Activated naive CD4-positive, alpha-beta T cell treated with anti-CD3 and anti-CD28 coated beads, Interleukin-2, amount 10 ng/mL, durations not matched to agents 7 days and 5 days (primary cell): ENCODE measurements at regions of chr17 and their contacts with region 1.

Region 1: DNA sequence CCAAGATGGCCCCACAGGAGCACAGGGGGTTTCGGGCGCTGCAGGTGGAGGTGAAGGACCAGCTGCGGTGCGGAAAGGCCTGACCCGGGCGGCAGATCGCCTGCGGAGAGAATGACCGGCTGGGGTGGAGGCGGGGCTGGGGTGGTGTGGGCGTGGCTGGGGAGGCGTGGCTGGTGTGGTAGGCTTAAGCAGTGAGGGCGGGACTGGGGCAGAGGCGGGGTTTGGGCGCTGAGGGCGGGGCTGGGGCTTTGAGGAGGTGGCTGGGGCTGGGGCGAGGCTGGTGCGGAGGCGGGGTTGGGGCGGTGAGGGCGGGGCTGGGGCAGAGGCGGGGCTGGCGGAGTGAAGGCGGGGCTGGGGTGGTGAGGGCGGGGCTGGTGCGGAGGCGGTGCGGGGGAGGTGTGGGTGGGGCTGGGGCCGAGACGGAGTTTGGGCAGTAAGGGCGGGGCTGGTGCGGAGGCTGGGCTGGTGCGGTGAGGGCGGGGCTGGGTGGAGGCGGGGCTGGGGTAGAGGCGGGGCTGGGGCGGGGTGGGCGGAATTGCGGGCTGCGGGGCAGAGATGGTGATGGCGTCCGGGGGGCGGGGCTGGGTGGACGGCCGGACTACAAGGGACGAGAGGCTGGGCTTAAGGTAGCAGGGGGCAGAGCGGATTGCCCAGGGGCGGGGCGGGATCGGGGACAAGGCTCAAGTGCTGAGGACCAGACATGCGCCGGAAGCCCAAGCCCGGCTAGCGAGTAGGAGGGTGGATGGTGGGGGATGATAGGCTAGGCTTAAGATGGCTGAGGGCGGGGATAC is 9.9 kb upstream of the GSDMA start:
- DNase-seq: peak; percentile 99
- H3K4me3 Mint-ChIP-seq: peak overlapping the region; percentile 79
- H3K27ac Mint-ChIP-seq: peak overlapping the region; percentile 62
- H3K4me1 Mint-ChIP-seq: peaks cover 39% of the 10 kb centered on the region
- H3K27me3 Mint-ChIP-seq: peaks cover 50% of the 10 kb centered on the region

Region 2: DNA sequence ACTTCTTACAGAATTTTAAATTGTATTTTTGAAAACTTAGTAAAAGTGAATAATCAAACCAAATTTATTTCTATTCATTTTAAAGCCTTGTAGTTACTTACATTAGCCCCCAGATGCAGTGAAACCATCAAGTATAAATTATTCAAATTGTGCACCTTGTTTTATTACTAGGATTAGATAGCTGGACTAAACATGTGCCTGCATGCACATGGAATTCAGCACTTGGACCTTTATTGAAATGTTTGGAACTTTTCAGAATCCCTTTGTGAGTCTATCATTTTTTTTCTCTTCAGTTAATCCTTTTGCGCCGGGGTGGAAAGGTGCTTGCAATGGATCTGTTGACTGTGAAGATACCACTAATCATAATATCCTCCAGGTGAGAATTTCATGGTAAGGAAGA is 80.1 kb before region 1 on chr17:
- CTCF ChIA-PET with region 1: interaction called, 19 read pairs
- DNase-seq: no peak
- H3K4me3 Mint-ChIP-seq: no peak overlapping the region
- H3K27ac Mint-ChIP-seq: no peak overlapping the region
- H3K4me1 Mint-ChIP-seq: peaks cover 16% of the 10 kb centered on the region
- H3K27me3 Mint-ChIP-seq: peaks cover 27% of the 10 kb centered on the region